ENCODE measurements at regions of chr5 and their contacts with region 1.

Region 1: GRCh38 chr5:18281682-18282557 is 647.7 kb downstream of the TAF11L14 start:
- ATAC-seq: peak in 6 of 8 experiments; percentile 50 to 91 (median 86)
- H3K4me3 ChIP-seq: no peak overlapping the region
- H3K27ac ChIP-seq: no peak overlapping the region
- H3K4me1 ChIP-seq: no peaks in the 10 kb centered on the region

Region 2: GRCh38 chr5:16791036-16791705 is 1490.7 kb before region 1 on chr5:
- in situ Hi-C with region 1: loop called in 1 of 9 experiments (anchors 25 kb)
- ATAC-seq: peak in 7 of 8 experiments; percentile 40 to 82 (median 61)
- H3K4me3 ChIP-seq: no peak overlapping the region
- H3K27ac ChIP-seq: no peak overlapping the region
- H3K4me1 ChIP-seq: peaks cover 4 to 10% of the 10 kb centered on the region in 2 donors

Region 3: DNA sequence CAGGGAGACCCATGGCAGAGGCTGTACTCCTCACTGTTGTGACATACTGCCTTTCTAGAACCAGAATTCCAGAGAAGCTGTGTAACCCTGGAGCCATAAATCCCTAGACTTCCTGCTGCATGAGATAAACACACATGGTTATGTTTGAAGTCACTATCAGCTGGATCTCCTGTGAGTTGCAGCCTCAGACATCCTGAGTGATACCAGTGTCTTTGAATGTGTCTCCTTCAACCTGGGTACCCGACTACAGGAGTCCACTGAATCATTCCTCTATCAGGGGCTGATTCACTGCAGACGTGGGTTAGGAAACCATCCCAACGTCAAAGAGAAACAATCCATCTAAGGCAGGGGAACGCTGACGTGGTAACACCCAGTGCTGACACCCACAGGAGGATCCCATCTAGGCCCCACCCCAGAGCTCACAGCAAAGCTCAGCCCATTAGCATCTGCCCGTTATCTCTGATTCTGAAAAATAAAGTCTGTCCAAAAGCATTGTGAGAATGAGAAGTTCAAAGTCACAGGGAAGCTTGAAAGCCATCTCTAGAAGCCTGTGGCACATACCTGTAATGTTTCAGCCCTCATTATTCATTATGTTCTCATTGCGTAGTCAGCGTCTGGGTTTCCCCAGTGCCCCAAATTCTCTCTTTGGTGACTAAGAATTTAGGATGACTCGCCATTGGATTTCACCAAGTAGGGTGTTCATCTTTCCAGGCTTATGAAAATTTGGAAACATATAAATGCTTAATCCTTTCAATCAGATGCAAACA is 1100.8 kb before region 1 on chr5:
- in situ Hi-C with region 1: no loop called
- ATAC-seq: peak in 2 of 8 experiments; percentile 53 to 69
- H3K4me3 ChIP-seq: no peak overlapping the region
- H3K27ac ChIP-seq: no peak overlapping the region
- H3K4me1 ChIP-seq: peaks cover 0 to 4% of the 10 kb centered on the region in 2 donors

Region 4: DNA sequence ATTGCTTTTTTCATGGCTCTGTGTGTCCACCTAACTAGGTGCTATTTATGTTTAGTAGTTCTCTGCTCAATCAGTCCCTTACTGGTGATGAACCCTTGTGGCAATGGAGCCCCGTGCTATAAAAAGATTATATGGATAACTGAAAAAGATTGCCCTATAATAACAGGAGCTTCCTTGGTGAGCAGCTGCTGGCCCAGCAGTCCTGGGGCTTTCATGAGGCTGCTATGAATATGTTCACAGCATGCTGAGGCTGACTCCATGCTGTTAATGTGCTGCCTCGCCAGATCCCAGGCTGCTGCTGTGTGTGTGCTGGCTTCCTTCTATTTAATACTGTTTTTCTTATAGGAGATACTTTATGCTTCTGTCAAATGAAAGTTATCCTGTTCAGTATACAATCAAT is 290.1 kb before region 1 on chr5:
- in situ Hi-C with region 1: no loop called
- ATAC-seq: peak in 5 of 8 experiments; percentile 73 to 85 (median 81)
- H3K4me3 ChIP-seq: no peak overlapping the region
- H3K27ac ChIP-seq: peak overlapping the region; percentile 40 to 45
- H3K4me1 ChIP-seq: peaks cover 24 to 41% of the 10 kb centered on the region in 2 donors

Region 5: DNA sequence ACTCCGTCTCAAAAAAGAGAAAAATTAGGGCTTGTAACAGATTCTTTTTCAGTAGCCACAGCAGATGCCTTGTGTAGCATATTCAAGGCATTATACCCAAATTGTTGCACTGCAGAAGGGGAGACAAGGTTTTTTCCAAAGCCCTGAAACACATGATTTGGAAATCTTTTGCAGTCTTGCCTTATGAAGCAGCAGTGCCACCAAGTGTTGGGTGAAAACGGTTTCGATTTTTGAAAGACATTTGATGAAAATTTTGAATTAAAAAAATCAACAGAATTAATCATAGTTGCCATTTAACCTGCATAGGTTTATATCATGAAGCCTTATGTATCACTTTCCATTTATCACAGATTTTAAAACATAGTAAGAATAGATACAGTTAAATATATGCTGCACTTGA is 168.2 kb before region 1 on chr5:
- in situ Hi-C with region 1: loop called in 1 of 9 experiments (anchors 25 kb)
- ATAC-seq: peak in 1 of 8 experiments; percentile 22
- H3K4me3 ChIP-seq: no peak overlapping the region
- H3K27ac ChIP-seq: no peak overlapping the region
- H3K4me1 ChIP-seq: peaks cover 17 to 36% of the 10 kb centered on the region in 2 donors

Measured in motor neuron (in vitro differentiated cells).